Tibial artery (tissue), 4 donors: ENCODE measurements at regions of chr6 and their contacts with region 1.

Region 1: DNA sequence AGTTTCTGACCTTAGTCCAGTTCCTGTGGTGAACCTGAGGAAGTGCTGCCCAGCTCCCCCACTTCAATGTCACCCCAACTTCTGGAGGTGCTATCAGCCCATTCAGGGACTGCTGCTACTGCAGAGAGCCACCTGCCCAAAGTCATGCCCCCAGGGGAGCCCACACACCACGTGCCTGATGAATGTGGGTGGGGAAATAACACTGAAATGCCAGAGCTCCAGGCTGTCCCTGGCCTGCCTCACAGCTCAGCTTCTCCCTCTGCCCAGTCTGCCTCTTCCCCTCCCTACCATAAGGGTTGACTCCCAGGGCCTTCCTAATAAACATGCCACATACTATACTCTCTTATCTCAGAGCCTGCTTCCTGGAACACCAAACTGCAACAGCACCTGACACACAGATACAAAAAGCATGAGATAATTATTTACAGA is 276.4 kb upstream of the MOCS1 start:
- DNase-seq: no peak
- H3K4me3 ChIP-seq: no peak overlapping the region
- H3K27ac ChIP-seq: no peak overlapping the region
- H3K4me1 ChIP-seq: no peaks in the 10 kb centered on the region
- H3K27me3 ChIP-seq: no peaks in the 10 kb centered on the region
- CTCF ChIP-seq: no peak

Region 2: GRCh38 chr6:40232698-40233097 is 22.1 kb after region 1 on chr6:
- intact Hi-C with region 1: loop called (anchors 2 kb)
- DNase-seq: no peak
- H3K4me3 ChIP-seq: no peak overlapping the region
- H3K27ac ChIP-seq: no peak overlapping the region
- H3K4me1 ChIP-seq: no peaks in the 10 kb centered on the region
- H3K27me3 ChIP-seq: peaks cover 0 to 31% of the 10 kb centered on the region in 2 donors
- CTCF ChIP-seq: no peak